Heart left ventricle (tissue), 16 donors: ENCODE measurements at regions of chr20 and their contacts with region 1.

Region 1: GRCh38 chr20:3446779-3447178 is 24.0 kb upstream of the ATRN start:
- DNase-seq: no peak
- ATAC-seq: no peak
- H3K4me3 ChIP-seq: no peak overlapping the region
- H3K27ac ChIP-seq: no peak overlapping the region
- H3K4me1 ChIP-seq: no peaks in the 10 kb centered on the region
- H3K27me3 ChIP-seq: no peaks in the 10 kb centered on the region
- CTCF ChIP-seq: no peak
- POLR2A ChIP-seq: no peak

Region 2: DNA sequence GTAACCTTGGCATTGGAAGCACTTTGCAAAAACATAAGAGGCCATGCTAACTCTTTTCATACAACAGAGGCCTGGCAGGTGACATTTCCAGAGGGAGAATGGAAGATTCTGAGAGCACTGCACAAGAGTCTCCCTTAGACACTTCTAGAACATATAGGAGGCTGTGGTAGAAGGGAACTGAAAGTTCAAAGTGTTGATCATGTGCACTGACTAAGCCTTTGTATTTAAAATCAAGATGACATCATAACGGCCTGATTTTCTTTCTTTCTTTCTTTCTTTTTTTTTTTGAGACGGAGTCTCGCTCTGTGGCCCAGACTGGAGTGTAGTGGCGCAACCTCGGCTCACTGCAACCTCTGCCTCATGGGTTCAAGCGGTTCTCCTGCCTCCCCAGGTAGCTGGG is 12.5 kb before region 1 on chr20:
- intact Hi-C with region 1: loop called in 1 of 10 experiments (anchors 1 kb)
- DNase-seq: no peak
- ATAC-seq: no peak
- H3K4me3 ChIP-seq: no peak overlapping the region
- H3K27ac ChIP-seq: peak overlapping the region in 1 of 12 donors; percentile 62
- H3K4me1 ChIP-seq: peaks cover 0 to 29% (median 0%) of the 10 kb centered on the region in 12 donors
- H3K27me3 ChIP-seq: no peaks in the 10 kb centered on the region
- CTCF ChIP-seq: no peak
- POLR2A ChIP-seq: no peak

Region 3: GRCh38 chr20:3510110-3510509 is 63.3 kb after region 1 on chr20:
- intact Hi-C with region 1: no loop called
- DNase-seq: no peak
- ATAC-seq: no peak
- H3K4me3 ChIP-seq: no peak overlapping the region
- H3K27ac ChIP-seq: no peak overlapping the region
- H3K4me1 ChIP-seq: peaks cover 0 to 8% (median 0%) of the 10 kb centered on the region in 12 donors
- H3K27me3 ChIP-seq: no peaks in the 10 kb centered on the region
- CTCF ChIP-seq: no peak
- POLR2A ChIP-seq: no peak

Region 4: GRCh38 chr20:3911956-3912355 is 465.2 kb after region 1 on chr20:
- intact Hi-C with region 1: no loop called
- DNase-seq: peak in 1 of 5 donors; percentile 47
- ATAC-seq: peak in 3 of 4 donors; percentile 23 to 47 (median 40)
- H3K4me3 ChIP-seq: no peak overlapping the region
- H3K27ac ChIP-seq: no peak overlapping the region
- H3K4me1 ChIP-seq: peaks cover 0 to 50% (median 27%) of the 10 kb centered on the region in 12 donors
- H3K27me3 ChIP-seq: no peaks in the 10 kb centered on the region
- CTCF ChIP-seq: no peak
- POLR2A ChIP-seq: no peak